Activated T-helper 2 cell treated with anti-CD3 and anti-CD28 coated beads, Interferon-gamma antibody, Interleukin-2, Interleukin-4, amounts not matched to agents 10 μg/mL and 5 μg/mL and 100 μg/mL, durations not matched to agents 14 hours and 24 hours and 36 hours (primary cell): ENCODE measurements at regions of chr2 and their contacts with region 1.

Region 1: DNA sequence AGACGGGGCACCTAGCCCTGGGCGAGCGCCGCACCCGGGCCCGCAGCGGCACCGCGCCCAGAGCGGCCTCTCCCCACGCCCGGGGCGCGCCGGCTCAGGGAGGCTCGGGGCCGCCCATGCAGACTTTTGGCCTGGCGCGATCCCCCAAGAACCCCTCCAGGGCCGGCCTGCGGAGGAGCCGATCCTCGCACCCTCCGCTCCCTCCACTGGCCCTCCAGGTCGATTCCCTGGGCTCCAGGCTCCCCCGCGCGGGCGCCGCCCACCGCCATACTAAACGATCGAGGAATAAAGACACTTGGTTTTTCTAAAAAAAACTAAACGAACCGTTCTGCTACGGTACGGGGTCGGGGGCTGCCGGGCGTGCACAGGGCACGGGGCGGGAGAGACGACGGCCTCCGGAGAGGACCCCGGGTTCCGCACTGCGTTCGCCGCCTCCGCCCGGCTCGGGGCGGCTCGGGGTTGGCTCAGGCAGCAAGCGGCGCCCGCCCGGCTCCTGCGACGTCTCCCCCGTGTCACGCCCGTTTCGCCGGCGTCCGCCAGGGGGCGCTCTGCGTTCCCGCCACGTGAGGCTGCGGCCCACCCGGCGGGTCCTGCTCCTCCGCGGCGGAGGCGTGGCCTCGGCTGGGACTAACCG is 365 bp upstream of the KHK start:
- DNase-seq: peak; percentile 98
- H3K4me3 Mint-ChIP-seq: peak overlapping the region; percentile 90
- H3K27ac Mint-ChIP-seq: peak overlapping the region; percentile 71
- H3K4me1 Mint-ChIP-seq: peaks cover 22% of the 10 kb centered on the region
- H3K27me3 Mint-ChIP-seq: no peaks in the 10 kb centered on the region

Region 2: DNA sequence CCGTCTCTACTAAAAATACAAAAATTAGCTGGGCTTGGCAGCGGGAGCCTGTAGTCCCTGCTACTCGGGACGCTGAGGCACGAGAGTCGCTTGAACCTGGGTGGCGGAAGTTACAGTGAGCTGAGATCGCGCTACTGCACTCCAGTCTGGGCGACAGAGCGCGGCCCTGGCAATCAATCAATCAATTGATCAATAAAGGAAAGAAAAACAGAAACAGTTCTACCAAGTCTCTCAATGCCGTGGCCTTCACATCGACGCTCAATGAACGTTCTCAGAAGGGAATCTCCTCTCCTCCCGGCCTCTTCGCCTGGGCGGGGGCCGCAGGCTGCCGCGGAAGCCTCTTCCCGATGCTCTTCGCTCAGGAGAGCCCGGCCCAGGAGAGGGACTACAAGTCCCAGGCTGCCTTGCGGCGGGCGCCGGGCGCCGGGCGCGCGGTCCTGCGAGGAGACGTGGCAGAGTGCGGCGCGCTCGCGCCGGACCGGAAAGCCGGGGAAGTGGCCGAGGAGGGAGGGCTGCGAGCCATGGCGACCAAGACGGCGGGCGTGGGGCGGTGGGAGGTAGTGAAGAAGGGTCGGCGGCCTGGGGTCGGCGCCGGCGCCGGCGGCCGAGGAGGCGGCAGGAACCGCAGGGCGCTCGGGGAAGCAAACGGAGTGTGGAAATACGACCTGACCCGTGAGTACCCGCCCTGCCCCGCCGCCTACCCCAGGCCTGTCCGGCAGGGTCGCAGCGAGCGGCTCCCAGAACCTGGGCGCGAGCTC is 53.5 kb before region 1 on chr2 and contains the start of gene TMEM214:
- intact Hi-C with region 1: loop called (anchors 1 kb)
- DNase-seq: peak; percentile 78
- H3K4me3 Mint-ChIP-seq: peak within 1 kb of the TSS; percentile 95
- H3K27ac Mint-ChIP-seq: peak within 1 kb of the TSS; percentile 87
- H3K4me1 Mint-ChIP-seq: peaks cover 31% of the 10 kb centered on the region
- H3K27me3 Mint-ChIP-seq: no peaks in the 10 kb centered on the region
- total RNA-seq, gene TMEM214: 96.3 and 102 TPM in 2 replicates

Region 3: DNA sequence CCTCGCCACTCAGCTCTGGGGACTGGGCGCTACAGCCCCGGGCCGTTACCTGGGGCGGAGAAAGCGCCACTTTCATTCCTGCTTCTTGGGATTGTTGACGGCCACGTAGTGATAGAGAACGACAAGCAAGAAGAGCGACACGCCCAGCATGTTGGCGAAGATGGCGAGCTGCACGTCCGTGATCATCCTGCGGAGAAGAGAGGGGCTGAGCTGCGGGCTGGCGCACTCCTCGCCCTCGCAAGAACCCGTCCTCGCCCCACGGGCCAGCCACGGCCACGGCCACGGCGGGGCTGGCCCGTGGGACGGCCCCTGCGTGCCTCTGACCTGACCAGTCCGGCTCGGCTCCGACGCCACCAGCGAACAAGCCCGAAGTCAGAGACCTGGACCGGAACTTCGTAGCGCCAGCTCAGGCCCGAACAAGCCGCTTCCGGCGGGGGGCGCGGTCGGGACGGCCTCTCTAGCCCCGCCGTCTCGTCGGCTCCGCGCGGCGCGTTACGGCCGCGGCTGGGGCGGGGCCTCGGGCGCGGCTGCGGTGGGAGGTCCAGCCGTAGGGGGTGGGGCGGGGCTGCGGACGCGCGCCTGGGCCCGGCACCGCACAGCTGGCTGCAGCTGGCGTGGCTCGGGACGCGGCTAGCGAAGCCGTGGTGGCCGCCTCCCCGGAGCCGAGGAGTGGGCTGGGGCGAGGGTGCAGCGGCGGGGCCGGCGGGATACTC is 14.8 kb before region 1 on chr2 and contains the start of gene OST4:
- intact Hi-C with region 1: loop called (anchors 1 kb)
- DNase-seq: peak; percentile 89
- H3K4me3 Mint-ChIP-seq: peak within 1 kb of the TSS; percentile 98
- H3K27ac Mint-ChIP-seq: peak within 1 kb of the TSS; percentile 90
- H3K4me1 Mint-ChIP-seq: peaks cover 49% of the 10 kb centered on the region
- H3K27me3 Mint-ChIP-seq: no peaks in the 10 kb centered on the region
- total RNA-seq, gene OST4: 330 and 341 TPM in 2 replicates

Region 4: DNA sequence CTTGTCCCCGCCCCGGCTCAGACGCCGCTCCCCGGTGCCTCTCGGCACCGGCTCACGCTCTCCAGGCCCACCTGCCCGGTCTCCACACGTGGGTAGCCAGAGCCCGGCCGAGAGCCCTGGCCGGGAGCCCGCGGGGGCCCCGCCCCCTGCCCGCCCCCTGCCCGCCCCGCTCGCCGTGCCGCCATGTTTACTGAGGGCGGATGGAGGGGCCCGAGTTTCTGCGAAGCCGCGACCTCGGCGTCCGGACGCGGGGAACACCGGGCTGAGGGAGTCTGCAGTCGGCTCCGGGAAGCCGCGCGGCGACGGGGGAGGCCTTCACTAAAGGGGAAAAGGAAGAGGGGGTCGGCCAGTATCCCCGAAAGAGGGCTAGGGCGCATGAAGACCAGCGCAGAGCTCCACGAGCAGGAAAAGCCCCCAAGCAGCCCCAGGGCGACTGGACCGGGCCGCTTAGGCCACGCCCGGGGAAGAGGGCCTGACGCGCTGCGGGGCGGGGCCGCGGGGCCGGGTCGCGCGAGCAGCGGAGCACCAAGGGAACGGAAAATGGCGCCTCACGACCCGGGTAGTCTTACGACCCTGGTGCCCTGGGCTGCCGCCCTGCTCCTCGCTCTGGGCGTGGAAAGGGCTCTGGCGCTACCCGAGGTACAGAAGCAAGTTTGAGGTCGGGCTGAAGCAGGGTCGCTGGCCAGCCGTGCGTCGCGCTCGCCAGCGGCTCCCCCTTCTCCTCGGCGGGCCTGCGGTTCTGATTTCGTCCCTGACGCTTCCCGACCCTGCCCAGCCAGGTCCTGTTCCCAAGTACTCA is 125.8 kb after region 1 on chr2 and contains the starts of genes ATRAID and SLC5A6:
- intact Hi-C with region 1: loop called (anchors 5 kb)
- DNase-seq: peak; percentile 88
- H3K4me3 Mint-ChIP-seq: peak within 1 kb of the TSS; percentile 98
- H3K27ac Mint-ChIP-seq: peak within 1 kb of the TSS; percentile 99
- H3K4me1 Mint-ChIP-seq: peaks cover 31% of the 10 kb centered on the region
- H3K27me3 Mint-ChIP-seq: no peaks in the 10 kb centered on the region
- total RNA-seq, gene ATRAID: 107 and 114 TPM in 2 replicates
- total RNA-seq, gene SLC5A6: 70.7 and 73.9 TPM in 2 replicates